ENCODE measurements at regions of chr1 and their contacts with region 1.

Region 1: DNA sequence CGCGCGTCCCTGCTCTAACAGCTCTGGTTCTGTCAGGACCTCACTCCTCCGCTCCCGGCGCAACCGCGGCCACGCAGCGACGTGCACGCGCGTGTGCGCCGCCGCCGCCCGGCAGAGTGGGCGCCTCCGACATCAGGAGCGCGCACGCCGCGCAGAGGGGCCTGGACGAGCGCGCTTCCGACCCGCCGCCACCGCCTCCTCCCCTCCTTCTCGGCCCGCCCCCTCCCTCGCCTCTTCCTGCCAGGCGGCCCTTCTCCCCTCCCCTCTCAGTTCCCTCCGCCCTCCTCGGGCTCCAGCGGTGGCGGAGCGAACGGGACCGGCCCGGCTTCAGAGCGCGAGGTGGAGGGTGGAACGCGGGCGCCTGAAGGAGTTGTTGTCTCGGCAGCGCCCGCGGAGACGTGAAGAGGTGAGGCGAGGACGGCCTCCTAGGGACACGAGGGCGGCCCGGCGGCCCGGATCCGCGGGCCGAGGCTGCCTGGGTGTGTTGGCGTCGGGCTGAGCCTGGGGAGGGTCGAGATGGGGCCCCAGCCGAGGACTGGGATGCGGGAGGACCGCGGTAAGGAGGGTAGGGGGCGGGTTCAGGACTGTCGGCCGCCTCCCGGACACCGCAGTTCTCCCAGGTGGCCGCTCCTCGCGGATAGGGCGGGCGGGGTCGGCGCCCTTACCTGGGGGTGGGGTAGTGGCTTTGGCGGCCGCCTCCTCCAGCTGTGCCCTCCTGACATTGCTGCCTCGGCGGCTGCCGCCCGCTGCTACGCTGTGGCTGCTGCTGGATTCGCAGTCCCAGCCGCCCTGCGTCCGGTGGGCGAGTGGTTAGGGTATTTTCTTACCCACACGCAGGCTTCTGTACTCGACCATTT is at the start of gene RABGAP1L:
- DNase-seq: peak; percentile 96 to 97 (median 96)
- ATAC-seq: peak; percentile 94 to 99 (median 98)
- H3K4me3 ChIP-seq: peak within 1 kb of the TSS; percentile 78 to 99 (median 92)
- H3K27ac ChIP-seq: peak within 1 kb of the TSS; percentile 81 to 97 (median 93)
- H3K4me1 ChIP-seq: peaks cover 0 to 29% (median 16%) of the 10 kb centered on the region in 12 donors
- H3K27me3 ChIP-seq: no peaks in the 10 kb centered on the region
- CTCF ChIP-seq: peak in 1 of 12 donors; percentile 25
- POLR2A ChIP-seq: peak; percentile 36 to 94
- total RNA-seq, gene RABGAP1L: 66.8 to 195 (median 98.4) TPM

Region 2: DNA sequence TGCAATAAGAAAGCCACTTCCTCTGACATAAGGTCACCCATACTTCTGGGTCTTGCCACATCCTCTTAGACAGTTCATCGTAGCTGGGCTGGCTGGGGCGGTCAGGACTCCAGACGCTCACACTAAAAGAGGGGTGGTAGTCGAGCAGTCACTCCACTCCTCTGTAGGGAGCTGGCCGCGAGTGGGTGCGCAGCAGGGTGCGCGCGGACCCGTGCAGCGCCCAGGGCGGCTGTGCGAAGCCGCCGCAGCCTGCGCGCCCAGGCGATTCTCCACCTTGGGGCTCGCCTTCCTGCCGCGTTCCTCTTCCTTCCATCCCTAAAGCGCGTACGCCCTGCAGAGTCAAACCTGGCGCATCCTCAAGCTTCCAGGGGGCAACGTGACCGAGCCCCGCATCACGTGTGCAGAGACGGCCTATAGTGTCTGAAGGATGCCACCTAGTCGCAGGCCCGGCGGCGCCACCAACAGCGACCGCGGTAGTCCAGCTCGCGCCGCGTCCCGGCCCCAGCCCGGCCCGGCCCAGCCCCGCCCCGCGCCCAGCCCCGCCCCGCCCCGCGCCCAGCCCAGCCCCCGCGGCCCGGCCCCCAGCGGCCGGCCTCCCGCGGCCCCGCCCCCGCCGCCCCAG is 682.7 kb before region 1 on chr1:
- intact Hi-C with region 1: loop called in 2 of 10 experiments (anchors 5 to 10 kb)
- DNase-seq: peak; percentile 92 to 97 (median 94)
- ATAC-seq: peak; percentile 88 to 92 (median 91)
- H3K4me3 ChIP-seq: peak overlapping the region; percentile 52 to 96 (median 79)
- H3K27ac ChIP-seq: peak overlapping the region; percentile 66 to 99 (median 96)
- H3K4me1 ChIP-seq: peaks cover 0 to 61% (median 50%) of the 10 kb centered on the region in 12 donors
- H3K27me3 ChIP-seq: no peaks in the 10 kb centered on the region
- CTCF ChIP-seq: peak in 4 of 12 donors; percentile 15 to 32 (median 24)
- POLR2A ChIP-seq: peak in 1 of 2 donors; percentile 30

Region 3: GRCh38 chr1:173914366-173914871 is 245.1 kb before region 1 on chr1:
- intact Hi-C with region 1: no loop called
- DNase-seq: no peak
- ATAC-seq: no peak
- H3K4me3 ChIP-seq: no peak overlapping the region
- H3K27ac ChIP-seq: no peak overlapping the region
- H3K4me1 ChIP-seq: no peaks in the 10 kb centered on the region
- H3K27me3 ChIP-seq: no peaks in the 10 kb centered on the region
- CTCF ChIP-seq: peak in 9 of 12 donors; percentile 17 to 42 (median 32)
- POLR2A ChIP-seq: no peak

Region 4: GRCh38 chr1:174005032-174005431 is 154.4 kb before region 1 on chr1:
- intact Hi-C with region 1: loop called in 1 of 10 experiments (anchors 10 kb)
- DNase-seq: peak in 1 of 5 donors; percentile 24
- ATAC-seq: peak; percentile 74 to 92 (median 78)
- H3K4me3 ChIP-seq: no peak overlapping the region
- H3K27ac ChIP-seq: peak overlapping the region in 8 of 12 donors; percentile 2 to 37 (median 17)
- H3K4me1 ChIP-seq: peaks cover 3 to 70% (median 47%) of the 10 kb centered on the region in 12 donors
- H3K27me3 ChIP-seq: no peaks in the 10 kb centered on the region
- CTCF ChIP-seq: no peak
- POLR2A ChIP-seq: no peak

Region 5: GRCh38 chr1:174114788-174115448 is 44.6 kb before region 1 on chr1:
- intact Hi-C with region 1: loop called in 2 of 10 experiments (anchors 5 to 10 kb)
- DNase-seq: no peak
- ATAC-seq: peak in 3 of 4 donors; percentile 34 to 77 (median 48)
- H3K4me3 ChIP-seq: no peak overlapping the region
- H3K27ac ChIP-seq: no peak overlapping the region
- H3K4me1 ChIP-seq: peaks cover 0 to 17% (median 0%) of the 10 kb centered on the region in 12 donors
- H3K27me3 ChIP-seq: no peaks in the 10 kb centered on the region
- CTCF ChIP-seq: peak; percentile 32 to 75 (median 52)
- POLR2A ChIP-seq: no peak

Region 6: GRCh38 chr1:174131021-174131638 is 28.4 kb before region 1 on chr1:
- intact Hi-C with region 1: no loop called
- DNase-seq: no peak
- ATAC-seq: no peak
- H3K4me3 ChIP-seq: no peak overlapping the region
- H3K27ac ChIP-seq: no peak overlapping the region
- H3K4me1 ChIP-seq: no peaks in the 10 kb centered on the region
- H3K27me3 ChIP-seq: no peaks in the 10 kb centered on the region
- CTCF ChIP-seq: no peak
- POLR2A ChIP-seq: no peak

Region 7: DNA sequence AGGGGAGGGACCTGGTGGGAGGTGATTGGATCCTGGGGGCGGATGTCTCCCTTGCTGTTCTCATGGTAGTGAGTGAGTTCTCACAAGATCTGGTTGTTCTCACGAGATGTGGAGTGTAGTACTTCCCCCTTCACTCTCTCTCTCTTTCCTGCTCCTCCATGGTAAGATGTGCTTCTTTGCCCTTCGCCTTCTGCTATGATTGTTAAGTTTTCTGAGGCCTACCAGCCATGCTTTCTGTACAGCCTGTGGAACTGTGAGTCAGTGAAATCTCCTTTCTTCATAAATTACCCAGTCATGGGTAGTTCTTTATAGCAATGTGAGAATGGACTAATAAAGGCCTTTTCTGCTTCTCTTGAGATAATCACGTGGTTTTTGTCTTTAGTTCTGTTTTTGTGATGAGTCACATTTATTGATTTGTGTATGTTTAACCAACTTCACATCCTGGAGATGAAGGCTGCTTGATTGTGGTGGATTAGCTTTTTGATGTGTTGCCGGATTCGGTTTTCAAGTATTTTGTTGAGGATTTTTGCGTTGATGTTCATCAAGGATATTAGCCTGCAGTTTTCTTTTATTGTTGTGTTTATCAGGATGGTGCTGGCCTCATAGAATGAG is 45.3 kb after region 1 on chr1:
- intact Hi-C with region 1: loop called in 1 of 10 experiments (anchors 5 kb)
- DNase-seq: no peak
- ATAC-seq: no peak
- H3K4me3 ChIP-seq: no peak overlapping the region
- H3K27ac ChIP-seq: peak overlapping the region in 10 of 12 donors; percentile 13 to 70 (median 40)
- H3K4me1 ChIP-seq: peaks cover 0 to 52% (median 18%) of the 10 kb centered on the region in 12 donors
- H3K27me3 ChIP-seq: no peaks in the 10 kb centered on the region
- CTCF ChIP-seq: no peak
- POLR2A ChIP-seq: no peak

Measured in heart left ventricle (tissue), 16 donors.